Activated CD4-positive, alpha-beta memory T cell treated with anti-CD3 and anti-CD28 coated beads for 36 hours (primary cell): ENCODE measurements at regions of chr19 and their contacts with region 1.

Region 1: GRCh38 chr19:14366498-14366915 is 14.7 kb upstream of the ADGRE5 start:
- DNase-seq: peak; percentile 96
- H3K4me3 Mint-ChIP-seq: peak overlapping the region; percentile 63
- H3K27ac Mint-ChIP-seq: peak overlapping the region; percentile 100
- H3K4me1 Mint-ChIP-seq: peaks cover 67% of the 10 kb centered on the region
- H3K27me3 Mint-ChIP-seq: no peaks in the 10 kb centered on the region

Region 2: DNA sequence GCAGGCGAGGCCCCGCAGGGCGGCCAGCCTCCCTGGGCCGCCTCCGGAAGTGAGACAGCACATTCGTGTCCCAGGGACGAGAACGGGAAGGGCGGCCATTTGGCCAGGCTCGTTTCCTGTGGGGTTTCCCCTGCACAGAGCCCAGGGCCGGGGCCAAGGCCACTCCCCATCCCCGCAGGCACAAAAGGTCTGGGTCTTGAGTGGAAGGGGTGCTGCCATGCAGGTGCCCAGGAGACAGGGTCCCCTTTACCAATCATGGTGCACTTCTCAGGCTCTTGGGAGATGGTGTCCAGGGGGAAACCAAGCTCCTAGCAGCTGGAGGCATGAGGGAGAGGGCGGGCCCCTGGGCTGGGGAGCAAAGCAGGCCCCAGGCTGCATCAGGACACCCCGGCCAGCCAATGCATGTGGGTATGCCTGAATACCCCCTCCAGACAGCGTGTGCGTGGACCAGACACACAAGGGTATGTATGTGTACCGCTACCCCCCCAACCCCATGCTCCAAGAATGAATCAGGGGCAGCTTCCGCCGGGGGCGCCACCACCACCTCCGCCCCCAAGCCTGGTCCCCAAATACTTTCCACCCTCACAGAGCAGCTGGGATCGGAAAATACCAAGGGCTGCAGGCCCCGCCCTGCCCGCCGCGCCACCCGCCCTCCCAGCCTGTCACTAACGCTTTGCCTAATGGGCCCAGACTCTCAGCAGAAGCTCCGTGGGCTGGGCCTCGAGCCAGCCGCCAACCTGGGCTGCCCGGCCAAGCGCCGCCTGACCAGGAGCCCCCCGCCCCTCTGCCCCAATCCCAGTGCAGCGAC is 527.2 kb before region 1 on chr19:
- CTCF ChIA-PET with region 1: no interaction called
- POLR2A ChIA-PET with region 1: interaction called, 3 read pairs
- intact Hi-C with region 1: loop called (anchors 5 kb)
- DNase-seq: peak; percentile 96
- H3K4me3 Mint-ChIP-seq: peak overlapping the region; percentile 91
- H3K27ac Mint-ChIP-seq: peak overlapping the region; percentile 97
- H3K4me1 Mint-ChIP-seq: peaks cover 33% of the 10 kb centered on the region
- H3K27me3 Mint-ChIP-seq: no peaks in the 10 kb centered on the region

Region 3: GRCh38 chr19:14347999-14348889 is 18.3 kb before region 1 on chr19:
- CTCF ChIA-PET with region 1: interaction called, 44 read pairs
- POLR2A ChIA-PET with region 1: interaction called, 3 read pairs
- intact Hi-C with region 1: no loop called
- DNase-seq: peak; percentile 79
- H3K4me3 Mint-ChIP-seq: peak overlapping the region; percentile 55
- H3K27ac Mint-ChIP-seq: peak overlapping the region; percentile 45
- H3K4me1 Mint-ChIP-seq: peaks cover 22% of the 10 kb centered on the region
- H3K27me3 Mint-ChIP-seq: no peaks in the 10 kb centered on the region

Region 4: DNA sequence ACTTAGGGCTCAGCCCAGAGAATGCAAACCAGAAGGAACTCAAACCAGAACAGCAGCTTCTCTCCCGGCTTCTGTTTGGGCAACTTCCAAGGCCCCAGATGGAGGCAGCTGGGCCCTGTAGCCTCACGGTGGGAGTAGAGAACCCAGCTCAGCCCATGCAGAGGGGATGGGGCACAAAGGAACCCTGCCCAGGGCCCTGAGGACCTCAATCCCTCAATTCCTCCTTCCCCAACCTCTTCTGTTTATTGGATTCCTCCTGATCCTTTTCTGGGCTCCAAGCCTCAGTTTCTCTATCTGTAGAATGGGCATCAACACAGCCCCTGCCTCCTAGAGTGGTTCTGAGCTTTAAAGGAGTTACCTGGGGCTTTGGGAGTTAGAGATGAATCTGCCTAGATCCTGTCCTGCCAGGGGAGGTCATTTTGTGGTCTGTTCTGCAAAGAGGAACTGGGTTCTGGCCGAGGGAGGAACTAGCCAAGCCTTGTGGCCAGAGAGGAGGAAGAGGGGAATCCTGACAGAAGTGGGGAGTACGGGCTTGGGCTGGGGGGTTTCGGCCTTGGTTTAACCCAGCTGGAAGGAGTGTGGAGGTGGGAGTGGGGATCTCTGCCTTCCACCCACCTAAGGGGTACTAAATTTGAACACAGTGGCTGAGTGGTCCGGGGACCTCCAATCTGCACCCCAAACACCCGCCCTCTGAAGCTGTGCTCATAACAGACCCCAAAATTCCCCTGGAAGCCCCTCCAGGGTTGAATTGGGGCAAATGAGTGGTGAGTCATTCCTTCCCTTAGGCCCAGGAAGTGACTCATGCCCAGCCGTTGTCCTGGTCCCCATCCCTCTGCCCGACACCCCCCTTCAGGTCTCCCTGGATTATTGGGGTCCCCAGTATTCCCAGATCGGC is 17.4 kb after region 1 on chr19:
- CTCF ChIA-PET with region 1: interaction called, 36 read pairs
- POLR2A ChIA-PET with region 1: interaction called, 315 read pairs
- intact Hi-C with region 1: loop called (anchors 1 kb)
- DNase-seq: peak; percentile 81
- H3K4me3 Mint-ChIP-seq: peak overlapping the region; percentile 84
- H3K27ac Mint-ChIP-seq: peak overlapping the region; percentile 95
- H3K4me1 Mint-ChIP-seq: peaks cover 30% of the 10 kb centered on the region
- H3K27me3 Mint-ChIP-seq: no peaks in the 10 kb centered on the region

Region 5: GRCh38 chr19:14419106-14419813 is 52.8 kb after region 1 on chr19 and contains the start of gene DDX39A:
- CTCF ChIA-PET with region 1: interaction called, 4 read pairs
- POLR2A ChIA-PET with region 1: no interaction called
- intact Hi-C with region 1: loop called (anchors 1 kb)
- DNase-seq: peak; percentile 99
- H3K4me3 Mint-ChIP-seq: peak within 1 kb of the TSS; percentile 95
- H3K27ac Mint-ChIP-seq: peak within 1 kb of the TSS; percentile 96
- H3K4me1 Mint-ChIP-seq: peaks cover 29% of the 10 kb centered on the region
- H3K27me3 Mint-ChIP-seq: peaks cover 2% of the 10 kb centered on the region
- total RNA-seq, gene DDX39A: 200 to 204 TPM

Region 6: DNA sequence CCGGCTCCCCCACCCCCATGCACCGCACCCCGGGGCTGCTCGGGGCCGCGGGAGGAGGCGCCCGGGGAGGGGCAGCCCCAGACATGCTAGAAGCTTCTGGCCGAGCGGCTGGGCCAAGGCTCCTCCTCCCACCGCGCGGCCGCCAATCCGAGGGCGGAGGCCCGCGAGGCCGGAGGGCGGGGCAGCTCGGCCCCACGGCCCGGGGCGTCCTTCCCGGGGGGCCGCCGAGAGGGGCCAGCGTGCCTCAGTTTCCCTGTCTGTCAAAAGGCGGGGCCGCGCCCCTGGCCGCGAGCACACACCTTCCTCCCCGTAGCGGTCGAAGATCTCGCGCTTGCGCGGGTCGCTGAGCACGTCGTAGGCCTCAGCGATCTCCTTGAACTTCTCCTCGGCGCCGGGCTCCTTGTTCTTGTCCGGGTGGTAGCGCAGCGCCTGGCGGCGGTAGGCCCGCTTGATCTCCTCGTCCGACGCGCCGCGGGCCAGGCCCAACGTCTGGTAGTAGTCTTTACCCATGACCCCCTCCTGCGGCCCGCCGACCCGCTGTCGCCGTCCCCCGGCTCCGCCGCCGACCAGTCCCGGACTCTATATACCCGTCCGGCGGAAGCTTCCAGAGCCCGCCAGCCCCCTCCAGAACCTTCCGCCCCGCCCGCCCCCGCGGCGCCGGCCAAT is 151.5 kb after region 1 on chr19 and contains the start of gene DNAJB1:
- CTCF ChIA-PET with region 1: interaction called, 3 read pairs
- POLR2A ChIA-PET with region 1: no interaction called
- intact Hi-C with region 1: loop called (anchors 2 kb)
- DNase-seq: peak; percentile 79
- H3K4me3 Mint-ChIP-seq: peak within 1 kb of the TSS; percentile 88
- H3K27ac Mint-ChIP-seq: peak within 1 kb of the TSS; percentile 97
- H3K4me1 Mint-ChIP-seq: peaks cover 60% of the 10 kb centered on the region
- H3K27me3 Mint-ChIP-seq: no peaks in the 10 kb centered on the region
- total RNA-seq, gene DNAJB1: 71.2 to 76.5 TPM